ENCODE measurements at regions of chr16 and their contacts with region 1.

Region 1: DNA sequence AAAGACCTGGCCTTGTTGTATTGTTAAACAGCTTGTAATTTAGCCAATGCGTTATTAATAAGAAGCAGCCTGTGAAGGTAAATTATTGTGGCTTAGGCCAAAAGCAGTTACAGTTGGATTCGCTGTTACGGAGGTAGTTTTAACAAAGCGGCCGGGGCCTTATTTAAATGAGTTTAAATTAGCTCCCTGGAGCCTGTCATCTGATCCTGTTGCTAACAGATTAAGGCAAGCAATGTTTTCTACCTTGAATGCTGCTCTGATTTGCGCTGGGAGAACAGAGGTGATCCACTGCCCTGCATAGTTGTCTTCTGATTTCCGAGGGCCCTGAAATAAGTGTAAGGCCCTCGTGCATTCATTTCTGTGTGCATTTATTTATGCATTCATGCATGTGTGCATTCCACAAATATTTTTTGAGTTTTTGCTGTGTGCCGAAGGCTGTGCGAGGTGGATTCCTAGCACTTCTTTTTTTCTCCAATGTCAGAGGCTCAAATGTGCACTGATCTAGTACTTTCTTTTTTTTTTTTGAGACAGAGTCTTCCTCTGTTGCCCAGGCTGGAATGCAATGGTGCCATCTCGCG is 10.8 kb downstream of the SEC14L5 start:
- DNase-seq: no peak
- H3K4me3 ChIP-seq: no peak overlapping the region
- H3K27ac ChIP-seq: no peak overlapping the region
- H3K4me1 ChIP-seq: peaks cover 0 to 8% of the 10 kb centered on the region in 2 donors
- H3K27me3 ChIP-seq: no peaks in the 10 kb centered on the region
- CTCF ChIP-seq: no peak
- POLR2A ChIP-seq: no peak

Region 2: GRCh38 chr16:4911831-4912417 is 57.0 kb before region 1 on chr16:
- intact Hi-C with region 1: no loop called
- DNase-seq: no peak
- H3K4me3 ChIP-seq: no peak overlapping the region
- H3K27ac ChIP-seq: no peak overlapping the region
- H3K4me1 ChIP-seq: peaks cover 0 to 4% of the 10 kb centered on the region in 2 donors
- H3K27me3 ChIP-seq: no peaks in the 10 kb centered on the region
- CTCF ChIP-seq: no peak
- POLR2A ChIP-seq: no peak

Region 3: GRCh38 chr16:5025171-5025632 is 56.2 kb after region 1 on chr16:
- intact Hi-C with region 1: loop called in 1 of 2 experiments (anchors 10 kb)
- DNase-seq: peak in 2 of 7 donors; percentile 21 to 30
- H3K4me3 ChIP-seq: no peak overlapping the region
- H3K27ac ChIP-seq: no peak overlapping the region
- H3K4me1 ChIP-seq: no peaks in the 10 kb centered on the region
- H3K27me3 ChIP-seq: no peaks in the 10 kb centered on the region
- CTCF ChIP-seq: no peak
- POLR2A ChIP-seq: no peak

Region 4: GRCh38 chr16:5193861-5194260 is 224.9 kb after region 1 on chr16:
- intact Hi-C with region 1: no loop called
- DNase-seq: no peak
- H3K4me3 ChIP-seq: no peak overlapping the region
- H3K27ac ChIP-seq: no peak overlapping the region
- H3K4me1 ChIP-seq: no peaks in the 10 kb centered on the region
- H3K27me3 ChIP-seq: no peaks in the 10 kb centered on the region
- CTCF ChIP-seq: no peak
- POLR2A ChIP-seq: no peak